ENCODE measurements at regions of chr12 and their contacts with region 1.

Region 1: GRCh38 chr12:30847259-30847658 is 79.3 kb upstream of the TSPAN11 start:
- DNase-seq: peak; percentile 33
- ATAC-seq: no peak
- H3K4me3 Mint-ChIP-seq: no peak overlapping the region
- H3K27ac Mint-ChIP-seq: no peak overlapping the region
- H3K4me1 Mint-ChIP-seq: peaks cover 10% of the 10 kb centered on the region
- H3K27me3 Mint-ChIP-seq: no peaks in the 10 kb centered on the region
- CTCF ChIP-seq: peak; percentile 81

Region 2: DNA sequence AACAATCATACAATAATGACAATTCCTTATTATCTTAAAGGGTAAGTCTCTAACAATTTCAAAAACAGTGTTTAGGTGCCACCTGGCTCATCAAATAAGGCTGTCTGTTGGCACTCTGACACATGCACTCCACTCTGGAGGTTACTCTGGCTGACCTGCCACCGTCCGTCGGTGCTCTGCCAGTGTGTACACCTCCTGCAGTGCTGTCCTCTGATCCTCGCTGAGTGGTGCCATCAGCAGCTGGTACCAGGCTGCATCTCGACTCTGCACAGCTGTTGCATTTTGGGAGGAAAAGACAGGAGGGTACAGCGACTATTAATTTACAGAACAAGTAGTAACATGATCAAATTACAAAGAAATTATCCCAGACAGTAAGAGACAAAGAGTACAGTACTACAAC is 215.5 kb before region 1 on chr12:
- CTCF ChIA-PET with region 1: no interaction called
- POLR2A ChIA-PET with region 1: no interaction called
- intact Hi-C with region 1: no loop called
- DNase-seq: no peak
- ATAC-seq: no peak
- H3K4me3 Mint-ChIP-seq: no peak overlapping the region
- H3K27ac Mint-ChIP-seq: no peak overlapping the region
- H3K4me1 Mint-ChIP-seq: peaks cover 3% of the 10 kb centered on the region
- H3K27me3 Mint-ChIP-seq: no peaks in the 10 kb centered on the region
- CTCF ChIP-seq: no peak

Region 3: GRCh38 chr12:30985814-30986452 is 138.7 kb after region 1 on chr12:
- CTCF ChIA-PET with region 1: interaction called, 36 read pairs
- POLR2A ChIA-PET with region 1: no interaction called
- intact Hi-C with region 1: loop called (anchors 5 kb)
- DNase-seq: peak; percentile 47
- ATAC-seq: peak; percentile 75
- H3K4me3 Mint-ChIP-seq: no peak overlapping the region
- H3K27ac Mint-ChIP-seq: no peak overlapping the region
- H3K4me1 Mint-ChIP-seq: no peaks in the 10 kb centered on the region
- H3K27me3 Mint-ChIP-seq: no peaks in the 10 kb centered on the region
- CTCF ChIP-seq: peak; percentile 34

Region 4: GRCh38 chr12:31238764-31239387 is 391.6 kb after region 1 on chr12:
- CTCF ChIA-PET with region 1: interaction called, 39 read pairs
- POLR2A ChIA-PET with region 1: no interaction called
- intact Hi-C with region 1: loop called (anchors 2 kb)
- DNase-seq: peak; percentile 81
- ATAC-seq: peak; percentile 79
- H3K4me3 Mint-ChIP-seq: no peak overlapping the region
- H3K27ac Mint-ChIP-seq: no peak overlapping the region
- H3K4me1 Mint-ChIP-seq: peaks cover 5% of the 10 kb centered on the region
- H3K27me3 Mint-ChIP-seq: peaks cover 11% of the 10 kb centered on the region
- CTCF ChIP-seq: peak; percentile 65

Region 5: DNA sequence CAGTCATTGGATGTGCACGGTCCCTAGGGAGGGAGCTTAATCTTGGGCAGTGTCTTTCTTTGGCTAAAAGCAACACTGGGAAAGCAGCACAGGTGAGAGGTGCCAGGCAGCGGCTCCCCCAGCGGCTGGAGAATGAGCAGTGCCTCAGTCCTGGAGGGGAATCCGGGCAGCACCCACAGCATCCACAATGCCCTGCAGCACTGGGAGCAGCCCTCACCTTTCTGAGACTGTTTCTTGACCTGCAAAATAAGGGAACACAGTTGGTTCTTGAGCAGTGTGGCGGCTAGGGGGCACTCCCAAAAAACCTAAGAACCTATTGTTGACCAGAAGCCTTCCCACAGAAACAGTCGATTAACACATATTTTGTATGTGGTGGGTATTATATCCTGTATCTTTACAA is 402.9 kb after region 1 on chr12:
- CTCF ChIA-PET with region 1: interaction called, 10 read pairs
- POLR2A ChIA-PET with region 1: no interaction called
- intact Hi-C with region 1: no loop called
- DNase-seq: no peak
- ATAC-seq: no peak
- H3K4me3 Mint-ChIP-seq: no peak overlapping the region
- H3K27ac Mint-ChIP-seq: no peak overlapping the region
- H3K4me1 Mint-ChIP-seq: no peaks in the 10 kb centered on the region
- H3K27me3 Mint-ChIP-seq: peaks cover 3% of the 10 kb centered on the region
- CTCF ChIP-seq: no peak

Measured in activated CD8-positive, alpha-beta T cell treated with anti-CD3 and anti-CD28 coated beads for 36 hours (primary cell).